Sigmoid colon (tissue), 7 donors: ENCODE measurements at regions of chr7 and their contacts with region 1.

Region 1: GRCh38 chr7:150368096-150368883 is at the start of gene REPIN1:
- DNase-seq: peak; percentile 97
- H3K4me3 ChIP-seq: peak within 1 kb of the TSS; percentile 69 to 92 (median 75)
- H3K27ac ChIP-seq: peak within 1 kb of the TSS; percentile 92 to 97 (median 95)
- H3K4me1 ChIP-seq: peaks cover 0 to 41% (median 34%) of the 10 kb centered on the region in 4 donors
- H3K27me3 ChIP-seq: no peaks in the 10 kb centered on the region
- CTCF ChIP-seq: no peak
- EP300 ChIP-seq: peak in 2 of 4 donors; percentile 11 to 57
- POLR2A ChIP-seq: peak in 1 of 2 donors; percentile 29
- total RNA-seq, gene REPIN1: 56.3 to 63.7 (median 57.0) TPM

Region 2: GRCh38 chr7:150378853-150379440 is 10.7 kb after region 1 on chr7 and contains the start of gene ZNF775:
- intact Hi-C with region 1: loop called (anchors 1 kb)
- DNase-seq: peak; percentile 98
- H3K4me3 ChIP-seq: peak within 1 kb of the TSS; percentile 84 to 98 (median 92)
- H3K27ac ChIP-seq: peak within 1 kb of the TSS; percentile 91 to 95 (median 94)
- H3K4me1 ChIP-seq: peaks cover 0 to 53% (median 36%) of the 10 kb centered on the region in 4 donors
- H3K27me3 ChIP-seq: no peaks in the 10 kb centered on the region
- CTCF ChIP-seq: no peak
- EP300 ChIP-seq: peak in 1 of 4 donors; percentile 29
- POLR2A ChIP-seq: peak; percentile 22 to 30
- total RNA-seq, gene ZNF775: 6.1 to 10.7 (median 6.9) TPM